Astrocyte of the cerebellum (primary cell): ENCODE measurements at regions of chr14 and their contacts with region 1.

Region 1: GRCh38 chr14:68792976-68793733 is at the start of gene ZFP36L1:
- DNase-seq: peak; percentile 90
- H3K4me3 ChIP-seq: peak within 1 kb of the TSS; percentile 99
- CTCF ChIP-seq: no peak

Region 2: DNA sequence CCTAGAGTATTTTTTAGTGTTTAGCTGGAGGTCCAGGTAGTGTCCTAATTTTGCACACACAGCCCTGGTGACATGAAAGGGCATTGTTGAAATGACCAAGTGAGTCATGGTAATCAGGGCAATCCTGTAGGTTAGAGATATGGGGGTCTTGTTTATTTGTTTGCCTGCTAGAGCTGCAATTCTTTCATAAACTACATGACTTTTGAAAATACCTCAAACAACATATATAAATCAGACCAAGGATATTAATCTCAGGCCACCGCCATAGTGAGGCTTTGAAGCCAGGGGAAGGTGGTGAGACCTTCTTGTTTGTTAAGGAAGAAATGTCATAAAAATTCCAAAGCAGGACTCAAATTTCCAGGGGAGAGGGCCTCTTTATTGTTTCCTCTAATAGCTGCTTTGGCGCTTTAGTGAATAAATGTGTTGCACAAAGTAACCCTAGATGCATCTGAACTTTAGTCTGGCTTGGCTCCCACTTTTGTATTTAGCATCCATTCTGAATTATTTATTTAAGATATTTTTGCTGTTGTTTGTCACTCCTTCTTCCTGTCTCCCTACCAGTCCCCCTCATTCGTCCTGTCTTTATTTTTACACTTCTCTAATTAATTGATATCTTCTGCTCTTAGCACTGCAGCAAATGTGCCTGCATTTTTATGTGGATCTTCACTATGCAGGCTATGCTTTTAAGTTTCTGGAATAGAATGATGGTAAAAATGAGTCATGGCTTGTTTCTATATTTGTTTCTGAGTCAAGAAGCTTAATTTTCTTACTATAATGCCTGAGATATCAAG is 543.3 kb before region 1 on chr14:
- in situ Hi-C with region 1: loop called (anchors 5 kb)
- DNase-seq: no peak
- H3K4me3 ChIP-seq: no peak overlapping the region
- CTCF ChIP-seq: no peak

Region 3: DNA sequence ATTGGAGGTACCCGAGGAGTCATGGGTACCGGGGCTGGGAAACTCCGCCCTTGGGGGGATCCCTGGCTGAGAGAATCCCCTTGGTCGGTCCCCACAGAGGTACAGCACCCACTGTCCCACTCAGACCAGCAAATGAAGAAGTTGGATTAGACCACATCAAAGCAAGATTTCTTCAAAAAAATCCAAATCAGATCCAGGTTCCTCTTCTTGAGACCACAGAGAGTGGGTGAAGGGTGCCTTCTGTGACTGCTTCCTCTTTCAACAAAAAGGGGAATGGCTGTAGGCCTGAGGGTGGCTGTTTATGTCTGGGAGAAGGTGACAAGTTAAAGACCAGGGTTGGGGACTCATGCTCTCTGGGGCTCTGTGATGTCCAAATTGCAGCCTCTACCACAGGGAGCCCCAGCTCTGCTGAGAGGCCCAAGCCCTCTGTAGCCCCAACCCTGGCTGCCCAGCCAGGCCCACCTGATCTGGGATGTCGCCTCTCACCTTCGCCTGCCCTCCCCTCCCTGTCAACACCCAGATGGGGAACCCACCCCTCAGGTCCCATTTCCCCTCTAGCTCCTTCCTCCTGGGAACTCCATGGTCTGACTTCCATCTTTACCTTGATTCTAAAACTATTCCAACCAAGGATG is 51.2 kb before region 1 on chr14:
- in situ Hi-C with region 1: no loop called
- DNase-seq: no peak
- H3K4me3 ChIP-seq: no peak overlapping the region
- CTCF ChIP-seq: no peak

Region 4: DNA sequence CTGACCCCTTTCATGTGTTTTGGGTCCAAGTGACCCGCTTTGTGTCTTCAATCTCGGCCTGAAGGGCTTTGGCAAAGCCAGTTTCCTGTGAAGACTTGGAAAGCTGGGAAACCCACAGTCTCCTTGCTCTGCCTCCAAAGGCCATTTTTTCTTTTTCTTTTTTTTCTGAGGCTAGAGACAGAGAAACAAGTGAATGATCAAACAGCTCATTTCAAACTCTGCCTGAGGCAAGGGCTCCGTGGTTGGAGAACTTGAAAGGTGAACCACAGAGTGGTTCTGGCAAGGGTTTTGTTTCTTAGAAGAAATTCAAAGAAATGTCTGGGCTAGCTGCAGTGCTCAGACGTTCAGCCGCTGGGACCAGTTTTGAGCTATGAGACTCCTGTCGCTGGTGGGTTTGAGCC is 542.2 kb after region 1 on chr14:
- in situ Hi-C with region 1: no loop called
- DNase-seq: peak; percentile 78
- H3K4me3 ChIP-seq: no peak overlapping the region
- CTCF ChIP-seq: no peak